Heart right ventricle (tissue), 16 donors: ENCODE measurements at regions of chr5 and their contacts with region 1.

Region 1: GRCh38 chr5:149310947-149311658 is 34.2 kb upstream of the GRPEL2 start:
- DNase-seq: peak; percentile 57 to 59
- ATAC-seq: peak in 7 of 8 donors; percentile 13 to 47 (median 31)
- H3K4me3 ChIP-seq: no peak overlapping the region
- H3K27ac ChIP-seq: peak overlapping the region in 8 of 10 donors; percentile 3 to 71 (median 42)
- H3K4me1 ChIP-seq: peaks cover 2 to 49% (median 19%) of the 10 kb centered on the region in 9 donors
- H3K27me3 ChIP-seq: no peaks in the 10 kb centered on the region
- CTCF ChIP-seq: no peak

Region 2: DNA sequence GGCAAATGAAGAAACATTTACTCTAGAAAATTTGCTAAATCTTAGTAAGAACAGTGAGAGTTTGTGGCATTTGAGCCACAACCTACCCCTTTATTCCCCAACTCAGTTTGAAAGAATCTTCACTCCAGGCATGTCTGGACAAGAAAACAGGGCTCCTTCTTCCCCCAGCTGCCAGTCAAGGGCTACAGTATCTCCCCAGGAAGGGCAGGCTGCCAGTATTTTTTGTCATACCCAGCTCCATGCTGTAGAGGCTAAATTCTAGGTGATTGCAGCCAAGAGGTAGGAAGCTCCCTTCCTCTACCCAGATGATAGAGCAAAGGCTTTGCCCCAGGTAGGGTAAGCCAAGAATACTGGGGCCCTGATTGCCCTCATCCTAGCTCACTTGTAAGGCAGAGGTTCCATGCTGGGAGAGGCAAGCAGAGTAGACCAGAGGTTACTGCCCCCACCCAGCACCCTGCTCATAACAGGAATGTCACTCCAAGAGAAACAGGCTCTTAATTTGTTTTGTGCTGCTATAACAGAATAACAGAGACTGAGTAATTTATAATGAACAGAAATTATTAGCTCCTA is 14.1 kb after region 1 on chr5:
- intact Hi-C with region 1: no loop called
- DNase-seq: peak in 1 of 2 donors; percentile 50
- ATAC-seq: peak in 1 of 8 donors; percentile 33
- H3K4me3 ChIP-seq: no peak overlapping the region
- H3K27ac ChIP-seq: peak overlapping the region in 6 of 10 donors; percentile 14 to 60 (median 35)
- H3K4me1 ChIP-seq: peaks cover 3 to 48% (median 34%) of the 10 kb centered on the region in 9 donors
- H3K27me3 ChIP-seq: no peaks in the 10 kb centered on the region
- CTCF ChIP-seq: no peak

Region 3: DNA sequence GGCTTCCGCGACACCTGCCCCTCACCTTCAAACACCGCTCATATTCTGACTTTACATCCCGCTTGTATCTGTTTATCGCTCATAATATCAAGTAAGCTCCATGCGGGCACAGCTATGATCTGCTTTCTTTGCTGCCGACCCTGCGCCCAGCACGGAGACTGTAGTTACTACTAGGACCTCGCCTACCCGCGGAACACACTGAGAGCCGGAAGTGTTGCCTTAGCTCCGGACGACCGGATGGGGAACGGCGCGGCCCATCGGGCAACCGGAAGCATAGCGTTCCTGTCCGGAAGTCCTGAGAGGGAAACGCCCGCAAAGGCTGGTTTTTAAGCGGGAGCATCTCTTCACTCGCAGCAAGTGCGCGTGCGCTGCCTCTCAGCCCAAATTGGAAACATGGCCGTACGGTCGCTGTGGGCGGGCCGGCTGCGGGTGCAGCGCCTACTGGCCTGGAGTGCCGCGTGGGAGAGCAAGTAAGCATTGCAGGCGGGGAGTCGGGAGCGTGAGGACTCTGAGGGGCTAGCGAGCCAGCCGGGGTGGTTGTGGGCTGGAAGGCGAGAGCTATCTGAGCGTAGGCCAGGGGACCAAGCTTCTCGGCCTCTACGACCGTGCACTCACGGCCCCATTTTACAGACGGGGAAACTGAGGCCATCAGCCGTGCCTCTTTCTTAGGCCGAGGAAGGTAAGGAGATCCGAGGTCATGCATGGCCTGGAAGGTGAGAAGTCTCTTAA is 34.2 kb after region 1 on chr5 and contains the start of gene GRPEL2:
- intact Hi-C with region 1: loop called in 1 of 10 experiments (anchors 5 kb)
- DNase-seq: peak; percentile 96
- ATAC-seq: peak; percentile 96 to 98 (median 98)
- H3K4me3 ChIP-seq: peak within 1 kb of the TSS; percentile 61 to 95 (median 76)
- H3K27ac ChIP-seq: peak within 1 kb of the TSS; percentile 57 to 89 (median 85)
- H3K4me1 ChIP-seq: peaks cover 0 to 51% (median 35%) of the 10 kb centered on the region in 9 donors
- H3K27me3 ChIP-seq: no peaks in the 10 kb centered on the region
- CTCF ChIP-seq: peak in 1 of 9 donors; percentile 1
- total RNA-seq, gene GRPEL2: 8.1 to 13.4 (median 10.2) TPM